Adrenal gland (tissue), 19 donors: ENCODE measurements at regions of chr17 and their contacts with region 1.

Region 1: GRCh38 chr17:979538-980405 is at the start of gene NXN:
- DNase-seq: peak; percentile 76 to 93 (median 88)
- H3K4me3 ChIP-seq: peak within 1 kb of the TSS in 2 of 4 donors; percentile 57 to 81
- H3K27ac ChIP-seq: peak within 1 kb of the TSS in 4 of 5 donors; percentile 24 to 86 (median 73)
- H3K4me1 ChIP-seq: peaks cover 5 to 9% of the 10 kb centered on the region in 2 donors
- H3K27me3 ChIP-seq: no peaks in the 10 kb centered on the region
- CTCF ChIP-seq: peak in 1 of 6 experiments; percentile 25
- POLR2A ChIP-seq: no peak
- total RNA-seq, gene NXN: 3.6 to 24.7 (median 12.8) TPM

Region 2: DNA sequence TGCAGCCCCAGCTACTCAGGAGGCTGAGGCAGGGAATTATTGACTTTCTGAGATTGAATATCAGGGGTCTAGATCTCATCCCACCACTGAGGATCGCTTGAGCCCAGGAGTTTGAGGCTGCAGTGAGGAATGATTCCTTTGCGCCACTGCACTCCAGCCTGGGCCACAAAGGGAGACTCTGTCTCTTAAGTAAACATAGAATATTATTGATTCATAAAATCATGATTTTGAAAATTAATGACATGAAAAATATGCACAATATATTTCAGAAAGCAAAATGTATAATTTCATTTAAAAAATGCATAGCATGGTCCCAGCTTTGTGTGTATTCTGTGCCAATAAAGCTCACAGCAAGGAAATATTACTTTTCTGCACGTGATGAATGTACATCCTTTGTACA is 263.5 kb before region 1 on chr17:
- intact Hi-C with region 1: loop called in 1 of 2 experiments (anchors 10 kb)
- DNase-seq: no peak
- H3K4me3 ChIP-seq: no peak overlapping the region
- H3K27ac ChIP-seq: no peak overlapping the region
- H3K4me1 ChIP-seq: peaks cover 9 to 27% of the 10 kb centered on the region in 2 donors
- H3K27me3 ChIP-seq: no peaks in the 10 kb centered on the region
- CTCF ChIP-seq: no peak
- POLR2A ChIP-seq: no peak

Region 3: GRCh38 chr17:896953-897661 is 82.7 kb before region 1 on chr17:
- intact Hi-C with region 1: loop called in 1 of 2 experiments (anchors 10 kb)
- DNase-seq: peak in 2 of 7 donors; percentile 3 to 29
- H3K4me3 ChIP-seq: no peak overlapping the region
- H3K27ac ChIP-seq: peak overlapping the region in 1 of 5 donors; percentile 45
- H3K4me1 ChIP-seq: peaks cover 5 to 11% of the 10 kb centered on the region in 2 donors
- H3K27me3 ChIP-seq: no peaks in the 10 kb centered on the region
- CTCF ChIP-seq: no peak
- POLR2A ChIP-seq: no peak